IMR-90 (cell line): ENCODE measurements at regions of chr4 and their contacts with region 1.

Region 1: DNA sequence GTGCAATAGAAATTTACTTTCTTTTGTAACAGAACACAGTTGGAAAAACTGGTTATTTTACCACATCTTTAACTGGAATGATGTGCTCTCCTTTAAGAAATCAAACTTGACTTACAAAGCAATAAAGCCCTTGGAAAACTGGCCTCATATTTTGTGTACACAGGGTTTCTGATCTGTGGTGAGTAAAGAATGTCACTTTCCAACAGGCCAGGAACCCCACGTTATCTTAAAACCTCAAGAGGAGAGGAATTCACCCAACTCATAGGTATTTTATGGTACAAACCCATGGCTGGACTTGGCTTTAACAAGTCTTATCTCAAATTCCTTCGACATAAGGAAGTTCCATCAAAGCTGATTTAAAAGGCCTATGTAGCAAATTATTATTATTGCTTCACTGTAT is 1735.0 kb downstream of the PCDH7 start:
- DNase-seq: no peak
- ATAC-seq: no peak
- H3K4me3 ChIP-seq: no peak overlapping the region
- H3K27ac ChIP-seq: no peak overlapping the region
- H3K4me1 ChIP-seq: no peaks in the 10 kb centered on the region
- H3K27me3 ChIP-seq: no peaks in the 10 kb centered on the region
- CTCF ChIP-seq: no peak
- POLR2A ChIP-seq: no peak
- RAD21 ChIP-seq: no peak

Region 2: DNA sequence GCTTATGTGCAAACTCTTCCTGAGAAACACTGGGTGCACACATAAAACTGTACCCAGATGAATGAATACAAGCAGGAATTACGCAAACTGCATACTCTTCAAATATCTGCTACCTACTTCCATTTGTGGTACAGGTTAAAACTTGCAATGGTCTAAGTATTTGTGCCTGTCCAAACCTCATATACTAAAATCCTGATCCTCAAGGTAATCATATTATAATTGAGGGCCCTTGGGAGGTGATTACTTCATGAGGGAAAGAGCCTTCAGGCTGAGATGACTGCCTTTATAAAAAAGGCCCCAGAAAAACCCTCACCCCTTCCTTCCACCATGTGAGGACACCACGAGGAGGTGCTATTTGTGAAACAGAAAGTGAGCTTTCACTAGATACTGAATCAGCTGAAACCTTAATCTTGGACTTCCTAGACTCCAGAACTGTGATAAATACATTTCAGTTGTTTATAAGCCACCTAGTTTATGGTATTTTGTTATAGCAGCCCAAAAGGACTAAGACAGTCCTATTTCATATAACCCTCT is 242.1 kb after region 1 on chr4:
- CTCF ChIA-PET with region 1: no interaction called
- POLR2A ChIA-PET with region 1: no interaction called
- dilution Hi-C with region 1: no loop called
- in situ Hi-C with region 1: no loop called
- intact Hi-C with region 1: loop called (anchors 5 kb)
- DNase-seq: no peak
- ATAC-seq: no peak
- H3K4me3 ChIP-seq: no peak overlapping the region
- H3K27ac ChIP-seq: no peak overlapping the region
- H3K4me1 ChIP-seq: no peaks in the 10 kb centered on the region
- H3K27me3 ChIP-seq: no peaks in the 10 kb centered on the region
- CTCF ChIP-seq: no peak
- POLR2A ChIP-seq: no peak
- RAD21 ChIP-seq: no peak